Naive thymus-derived CD4-positive, alpha-beta T cell (primary cell): ENCODE measurements at regions of chr14 and their contacts with region 1.

Region 1: DNA sequence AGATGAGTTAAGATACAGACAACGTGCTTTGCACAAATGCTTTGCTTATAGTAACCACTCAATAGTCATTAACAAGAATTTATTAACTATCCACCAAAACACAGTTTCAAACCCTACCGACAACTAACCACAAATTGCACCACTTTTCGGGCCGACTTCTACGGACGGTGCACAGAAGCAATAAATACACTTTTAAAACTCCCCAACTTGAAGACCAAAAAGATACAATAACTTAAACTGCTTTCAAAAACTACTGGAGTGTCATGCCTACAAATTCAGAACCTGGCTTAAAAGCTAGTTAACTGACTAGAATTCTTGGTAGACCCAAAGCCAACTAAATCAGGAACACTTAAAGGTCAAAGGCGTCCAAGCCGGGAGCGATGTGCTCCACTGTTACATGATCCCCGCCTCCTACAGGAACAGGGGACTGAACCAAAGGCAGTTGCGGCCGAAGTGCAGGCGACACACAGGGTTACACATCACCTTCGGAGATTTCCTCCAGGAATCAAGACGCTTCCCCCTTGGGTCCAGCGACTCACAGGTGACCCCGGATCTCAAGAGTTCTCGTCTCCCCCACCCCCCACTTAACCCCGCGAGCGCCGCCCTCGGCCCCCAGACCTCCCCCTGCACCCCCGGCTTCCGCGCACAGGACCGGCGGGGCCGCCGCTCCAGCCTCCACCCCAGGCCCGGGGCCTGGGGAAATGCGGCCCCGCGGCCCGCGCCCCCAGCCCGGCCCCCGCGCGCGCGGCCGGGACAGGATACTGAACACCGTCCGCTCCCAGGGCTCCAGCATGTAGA is 507 bp downstream of the SPTSSA start:
- DNase-seq: peak in 7 of 9 donors; percentile 2 to 22 (median 16)
- ATAC-seq: peak; percentile 4
- H3K4me3 ChIP-seq: peak overlapping the region; percentile 70
- H3K4me3 Mint-ChIP-seq: peak overlapping the region; percentile 83 to 97 (median 89)
- H3K27ac ChIP-seq: peak overlapping the region; percentile 78
- H3K27ac Mint-ChIP-seq: peak overlapping the region; percentile 60 to 94 (median 86)
- H3K4me1 ChIP-seq: peaks cover 0 to 6% of the 10 kb centered on the region in 2 donors
- H3K4me1 Mint-ChIP-seq: peaks cover 11 to 25% (median 15%) of the 10 kb centered on the region in 7 donors
- H3K27me3 ChIP-seq: no peaks in the 10 kb centered on the region
- H3K27me3 Mint-ChIP-seq: no peaks in the 10 kb centered on the region

Region 2: DNA sequence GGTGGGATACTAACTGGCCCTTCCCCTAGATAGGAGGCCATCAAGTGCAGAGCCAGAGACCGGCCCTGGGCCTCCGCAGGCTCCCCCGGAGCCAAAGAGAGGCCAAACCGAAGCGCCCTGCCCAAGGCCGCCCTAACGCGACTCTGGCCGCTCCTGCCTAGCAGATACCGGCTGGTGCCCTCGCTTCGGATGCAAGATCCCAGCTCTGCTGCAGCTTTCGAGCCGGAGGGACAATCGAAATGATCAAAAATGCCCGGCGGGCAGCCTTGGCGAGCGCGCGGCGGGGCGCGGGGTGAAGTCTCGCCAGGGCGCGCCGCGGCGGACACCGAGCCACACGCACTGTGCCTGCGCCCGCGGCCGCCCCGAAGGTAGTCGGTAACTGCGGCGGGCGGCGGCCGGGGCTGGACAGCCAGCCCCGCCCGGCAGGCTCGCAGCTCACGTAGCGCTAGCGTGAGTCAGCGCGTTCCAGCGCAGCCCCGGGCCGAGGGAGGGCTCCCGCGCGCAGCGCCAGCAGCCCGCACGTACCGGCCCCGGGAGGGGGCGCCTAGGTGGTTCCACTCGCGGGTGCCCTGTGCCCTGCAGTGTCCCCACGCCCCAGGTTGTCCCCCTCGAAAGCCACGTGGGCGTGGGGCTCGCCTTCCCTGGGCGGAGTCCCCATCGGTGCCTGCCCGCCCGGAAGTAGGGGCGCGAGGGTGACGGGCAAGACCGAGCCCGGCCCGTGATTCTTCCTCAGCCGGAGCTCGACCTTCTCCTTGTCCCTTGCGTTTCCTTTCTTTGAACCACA is 401.5 kb before region 1 on chr14:
- CTCF ChIA-PET with region 1: no interaction called
- POLR2A ChIA-PET with region 1: no interaction called
- intact Hi-C with region 1: loop called in 1 of 2 experiments (anchors 10 kb)
- DNase-seq: peak in 4 of 9 donors; percentile 5 to 77 (median 22)
- ATAC-seq: peak; percentile 95
- H3K4me3 ChIP-seq: peak overlapping the region; percentile 37
- H3K4me3 Mint-ChIP-seq: peak overlapping the region; percentile 77 to 90 (median 82)
- H3K27ac ChIP-seq: no peak overlapping the region
- H3K27ac Mint-ChIP-seq: peak overlapping the region in 1 of 9 donors; percentile 92
- H3K4me1 ChIP-seq: no peaks in the 10 kb centered on the region
- H3K4me1 Mint-ChIP-seq: peaks cover 0 to 52% (median 7%) of the 10 kb centered on the region in 7 donors
- H3K27me3 ChIP-seq: no peaks in the 10 kb centered on the region
- H3K27me3 Mint-ChIP-seq: peaks cover 9 to 15% (median 13%) of the 10 kb centered on the region in 5 donors

Region 3: GRCh38 chr14:34539407-34540180 is 78.1 kb after region 1 on chr14 and contains the start of gene EAPP:
- CTCF ChIA-PET with region 1: no interaction called
- POLR2A ChIA-PET with region 1: interaction called, 7 read pairs
- intact Hi-C with region 1: loop called (anchors 5 kb)
- DNase-seq: peak; percentile 84 to 95 (median 91)
- ATAC-seq: peak; percentile 100
- H3K4me3 ChIP-seq: peak within 1 kb of the TSS; percentile 100
- H3K4me3 Mint-ChIP-seq: peak within 1 kb of the TSS; percentile 95 to 99 (median 99)
- H3K27ac ChIP-seq: peak within 1 kb of the TSS; percentile 97
- H3K27ac Mint-ChIP-seq: peak within 1 kb of the TSS; percentile 95 to 100 (median 99)
- H3K4me1 ChIP-seq: peaks cover 18 to 24% of the 10 kb centered on the region in 2 donors
- H3K4me1 Mint-ChIP-seq: peaks cover 5 to 45% (median 31%) of the 10 kb centered on the region in 7 donors
- H3K27me3 ChIP-seq: no peaks in the 10 kb centered on the region
- H3K27me3 Mint-ChIP-seq: no peaks in the 10 kb centered on the region
- total RNA-seq, gene EAPP: 34.8 to 84.3 (median 60.9) TPM

Region 4: GRCh38 chr14:34629657-34630529 is 168.4 kb after region 1 on chr14 and contains the start of gene SNX6:
- CTCF ChIA-PET with region 1: no interaction called
- POLR2A ChIA-PET with region 1: no interaction called
- intact Hi-C with region 1: loop called in 1 of 2 experiments (anchors 1 kb)
- DNase-seq: peak; percentile 75 to 87 (median 83)
- ATAC-seq: peak; percentile 100
- H3K4me3 ChIP-seq: peak within 1 kb of the TSS; percentile 72
- H3K4me3 Mint-ChIP-seq: peak within 1 kb of the TSS; percentile 89 to 100 (median 98)
- H3K27ac ChIP-seq: peak within 1 kb of the TSS; percentile 98
- H3K27ac Mint-ChIP-seq: peak within 1 kb of the TSS; percentile 92 to 97 (median 96)
- H3K4me1 ChIP-seq: peaks cover 17 to 20% of the 10 kb centered on the region in 2 donors
- H3K4me1 Mint-ChIP-seq: peaks cover 6 to 49% (median 33%) of the 10 kb centered on the region in 7 donors
- H3K27me3 ChIP-seq: no peaks in the 10 kb centered on the region
- H3K27me3 Mint-ChIP-seq: peaks cover 0 to 18% (median 0%) of the 10 kb centered on the region in 5 donors
- total RNA-seq, gene SNX6: 56.6 to 78.9 (median 59.7) TPM

Region 5: DNA sequence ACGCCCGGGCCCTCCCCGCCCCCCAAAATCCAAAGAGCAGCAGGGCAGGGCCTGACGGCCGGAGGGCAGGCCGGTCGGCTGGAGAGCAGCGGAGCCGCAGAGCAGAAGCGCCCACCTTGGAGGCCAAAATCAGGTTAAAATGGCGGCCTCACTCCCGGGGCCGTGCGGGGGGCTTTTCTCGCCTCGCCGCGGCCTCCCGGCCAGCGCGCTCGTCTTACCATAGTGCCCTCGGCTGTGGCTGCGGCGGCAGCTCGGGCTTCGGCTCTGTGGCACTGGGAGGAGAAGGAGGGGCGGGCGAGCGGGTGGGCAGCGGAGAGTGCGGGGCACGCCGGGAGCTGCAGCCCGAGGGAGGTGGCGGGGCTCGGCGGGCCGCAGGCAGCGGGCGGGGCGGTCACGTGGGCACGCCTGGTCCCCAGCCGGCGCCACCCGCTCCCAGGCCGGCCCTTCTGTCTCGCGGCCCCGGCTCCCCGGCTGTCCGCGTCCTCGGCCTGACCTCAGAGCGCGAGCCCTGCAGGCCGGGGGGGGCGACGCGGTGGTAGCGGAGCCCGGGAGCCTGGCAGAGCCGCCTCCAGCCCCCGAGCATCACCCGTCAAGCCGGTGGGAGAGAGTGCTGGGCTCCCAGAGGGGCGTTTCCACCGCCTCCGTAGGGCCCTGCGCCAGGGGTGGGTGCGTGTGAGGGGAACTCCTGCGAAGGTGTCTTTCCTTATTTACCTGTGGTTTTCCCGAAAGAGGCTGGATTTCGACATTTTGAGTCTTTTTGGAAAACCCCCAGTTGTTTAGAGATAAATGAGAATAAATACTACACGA is 253.0 kb after region 1 on chr14 and contains the start of gene CFL2:
- CTCF ChIA-PET with region 1: no interaction called
- POLR2A ChIA-PET with region 1: no interaction called
- intact Hi-C with region 1: loop called in 1 of 2 experiments (anchors 5 kb)
- DNase-seq: peak; percentile 41 to 85 (median 54)
- ATAC-seq: peak; percentile 86
- H3K4me3 ChIP-seq: peak within 1 kb of the TSS; percentile 62
- H3K4me3 Mint-ChIP-seq: peak within 1 kb of the TSS; percentile 89 to 97 (median 92)
- H3K27ac ChIP-seq: peak within 1 kb of the TSS; percentile 93
- H3K27ac Mint-ChIP-seq: peak within 1 kb of the TSS; percentile 85 to 95 (median 92)
- H3K4me1 ChIP-seq: peaks cover 4 to 6% of the 10 kb centered on the region in 2 donors
- H3K4me1 Mint-ChIP-seq: peaks cover 8 to 39% (median 27%) of the 10 kb centered on the region in 7 donors
- H3K27me3 ChIP-seq: no peaks in the 10 kb centered on the region
- H3K27me3 Mint-ChIP-seq: peaks cover 0 to 20% (median 0%) of the 10 kb centered on the region in 5 donors
- total RNA-seq, gene CFL2: 5.2 to 34.2 (median 11.7) TPM

Region 6: DNA sequence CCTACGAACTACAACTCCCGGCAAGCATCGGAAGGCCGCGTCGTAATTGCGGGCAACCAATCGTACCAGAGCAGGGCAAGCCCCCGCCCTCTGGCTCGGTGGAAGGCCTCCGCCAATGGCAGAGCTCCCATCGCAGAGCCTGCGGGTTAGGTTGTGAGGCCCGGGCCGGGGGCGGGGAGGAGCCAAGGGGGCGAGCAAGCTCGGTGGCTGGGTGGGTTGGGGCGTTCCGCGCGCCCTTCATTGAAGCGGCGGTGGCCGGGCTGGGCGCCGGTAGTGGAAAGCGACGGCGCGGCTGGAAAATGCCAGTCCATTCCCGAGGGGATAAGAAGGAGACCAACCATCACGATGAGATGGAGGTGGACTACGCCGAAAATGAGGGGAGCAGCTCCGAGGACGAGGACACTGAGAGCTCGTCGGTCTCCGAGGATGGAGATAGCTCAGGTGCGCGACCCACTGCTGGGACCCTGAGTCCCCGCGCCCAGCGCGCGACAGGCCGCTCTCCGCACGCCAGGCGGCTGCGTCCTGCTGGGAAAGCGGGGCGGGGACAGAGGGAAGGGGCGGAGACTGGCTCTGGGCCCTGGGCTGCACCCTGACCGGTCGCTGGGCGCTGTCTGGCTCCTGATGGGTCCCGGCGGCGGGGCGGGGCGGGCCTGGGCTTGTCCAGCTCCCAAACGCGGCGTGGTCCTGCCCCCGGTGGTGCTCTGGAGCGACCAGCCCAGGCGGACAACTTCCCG is 1364.9 kb after region 1 on chr14 and contains the start of gene BRMS1L:
- CTCF ChIA-PET with region 1: interaction called, 3 read pairs
- POLR2A ChIA-PET with region 1: no interaction called
- intact Hi-C with region 1: loop called (anchors 1 to 5 kb)
- DNase-seq: peak; percentile 88 to 97 (median 96)
- ATAC-seq: peak; percentile 99
- H3K4me3 ChIP-seq: peak within 1 kb of the TSS; percentile 95
- H3K4me3 Mint-ChIP-seq: peak within 1 kb of the TSS; percentile 84 to 96 (median 90)
- H3K27ac ChIP-seq: peak within 1 kb of the TSS; percentile 87
- H3K27ac Mint-ChIP-seq: peak within 1 kb of the TSS; percentile 53 to 94 (median 88)
- H3K4me1 ChIP-seq: peaks cover 6 to 8% of the 10 kb centered on the region in 2 donors
- H3K4me1 Mint-ChIP-seq: peaks cover 11 to 31% (median 25%) of the 10 kb centered on the region in 7 donors
- H3K27me3 ChIP-seq: no peaks in the 10 kb centered on the region
- H3K27me3 Mint-ChIP-seq: no peaks in the 10 kb centered on the region
- total RNA-seq, gene BRMS1L: 4.2 to 8.6 (median 5.8) TPM

Region 7: GRCh38 chr14:36320200-36320896 is 1858.8 kb after region 1 on chr14 and contains the start of gene MBIP:
- CTCF ChIA-PET with region 1: no interaction called
- POLR2A ChIA-PET with region 1: no interaction called
- intact Hi-C with region 1: loop called in 1 of 2 experiments (anchors 10 kb)
- DNase-seq: peak; percentile 65 to 96 (median 85)
- ATAC-seq: peak; percentile 99
- H3K4me3 ChIP-seq: peak within 1 kb of the TSS; percentile 97
- H3K4me3 Mint-ChIP-seq: peak within 1 kb of the TSS; percentile 88 to 99 (median 98)
- H3K27ac ChIP-seq: peak within 1 kb of the TSS; percentile 81
- H3K27ac Mint-ChIP-seq: peak within 1 kb of the TSS; percentile 90 to 97 (median 95)
- H3K4me1 ChIP-seq: peaks cover 4 to 12% of the 10 kb centered on the region in 2 donors
- H3K4me1 Mint-ChIP-seq: peaks cover 16 to 52% (median 46%) of the 10 kb centered on the region in 7 donors
- H3K27me3 ChIP-seq: no peaks in the 10 kb centered on the region
- H3K27me3 Mint-ChIP-seq: peaks cover 6 to 25% (median 10%) of the 10 kb centered on the region in 5 donors
- total RNA-seq, gene MBIP: 22.5 to 42.7 (median 24.6) TPM